AG04450 (cell line): ENCODE measurements at regions of chr11 and their contacts with region 1.

Region 1: GRCh38 chr11:115153135-115153534 is 351.1 kb downstream of the CADM1 start:
- DNase-seq: no peak
- H3K4me3 ChIP-seq: no peak overlapping the region
- H3K27ac ChIP-seq: no peak overlapping the region
- H3K27me3 ChIP-seq: peaks cover 4% of the 10 kb centered on the region
- CTCF ChIP-seq: no peak

Region 2: GRCh38 chr11:115170133-115170815 is 17.1 kb after region 1 on chr11:
- CTCF ChIA-PET with region 1: no interaction called
- POLR2A ChIA-PET with region 1: no interaction called
- DNase-seq: no peak
- H3K4me3 ChIP-seq: no peak overlapping the region
- H3K27ac ChIP-seq: no peak overlapping the region
- H3K27me3 ChIP-seq: peaks cover 19% of the 10 kb centered on the region
- CTCF ChIP-seq: peak; percentile 76

Region 3: DNA sequence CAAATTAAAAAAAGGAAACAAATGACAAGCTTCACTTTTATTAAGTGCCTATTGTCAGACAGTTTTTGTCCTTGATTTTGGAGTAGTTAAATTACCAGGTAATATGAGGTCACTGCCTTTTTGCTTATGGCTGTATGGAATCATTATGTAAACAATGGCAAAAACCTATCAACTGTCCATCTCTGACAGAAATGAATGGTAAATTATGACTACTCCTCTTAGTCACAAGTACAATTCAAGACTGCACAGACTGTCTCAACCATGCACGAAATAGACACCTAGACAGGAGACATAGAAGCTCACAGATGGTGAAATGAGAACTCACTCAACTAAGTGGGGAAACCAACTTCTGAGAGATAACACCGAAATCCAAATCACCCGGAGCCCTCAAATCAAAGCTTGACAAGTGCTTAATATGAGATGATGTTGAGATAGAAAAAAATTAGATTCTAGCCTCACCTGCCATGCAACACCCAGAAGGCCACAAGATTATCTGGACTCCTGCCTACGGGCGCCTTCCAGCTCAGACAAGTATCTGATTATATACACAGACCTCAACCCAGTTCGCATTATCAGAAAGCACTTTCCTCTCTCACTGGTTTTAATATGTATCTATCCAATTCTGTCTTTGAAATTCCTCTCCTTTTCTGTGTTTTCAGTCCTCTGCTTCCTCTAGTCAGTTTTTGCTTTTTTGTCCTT is 151.8 kb after region 1 on chr11:
- CTCF ChIA-PET with region 1: interaction called, 16 read pairs
- POLR2A ChIA-PET with region 1: no interaction called
- DNase-seq: no peak
- H3K4me3 ChIP-seq: no peak overlapping the region
- H3K27ac ChIP-seq: no peak overlapping the region
- H3K27me3 ChIP-seq: no peaks in the 10 kb centered on the region
- CTCF ChIP-seq: no peak